GM12878 (cell line): ENCODE measurements at regions of chr1 and their contacts with region 1.

Region 1: GRCh38 chr1:106072909-106073600 is 983.4 kb upstream of the PRMT6 start:
- DNase-seq: no peak
- ATAC-seq: peak; percentile 99
- H3K4me3 ChIP-seq: no peak overlapping the region
- H3K27ac ChIP-seq: no peak overlapping the region
- H3K4me1 ChIP-seq: no peaks in the 10 kb centered on the region
- H3K27me3 ChIP-seq: no peaks in the 10 kb centered on the region
- CTCF ChIP-seq: no peak
- EP300 ChIP-seq: no peak
- POLR2A ChIP-seq: no peak
- RAD21 ChIP-seq: no peak

Region 2: DNA sequence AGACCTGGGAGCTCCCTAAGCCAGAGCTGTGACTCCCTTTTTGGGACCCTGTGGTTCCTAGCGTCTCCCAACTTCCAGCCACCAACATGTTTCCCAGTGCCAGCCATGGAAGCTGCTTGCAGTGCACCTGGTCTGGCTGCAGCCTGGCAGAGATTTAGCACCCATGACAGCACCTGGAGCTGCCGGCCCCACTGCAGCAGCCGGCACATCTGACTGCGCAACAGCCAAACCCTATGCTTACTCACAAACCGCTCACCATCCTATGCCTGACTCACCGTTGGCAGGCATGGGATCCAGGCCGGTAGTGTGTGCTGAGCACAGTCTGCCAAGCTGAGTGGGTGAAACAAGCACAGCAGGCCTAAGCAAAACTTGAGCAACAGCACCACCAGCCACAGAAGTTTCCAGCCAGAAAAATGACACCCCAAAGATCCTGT is 547.5 kb after region 1 on chr1:
- CTCF ChIA-PET with region 1: no interaction called
- POLR2A ChIA-PET with region 1: no interaction called
- RAD21 ChIA-PET with region 1: no interaction called
- SMC1A ChIA-PET with region 1: no interaction called
- in situ Hi-C with region 1: no loop called
- intact Hi-C with region 1: no loop called
- DNase-seq: no peak
- ATAC-seq: no peak
- H3K4me3 ChIP-seq: no peak overlapping the region
- H3K27ac ChIP-seq: no peak overlapping the region
- H3K4me1 ChIP-seq: no peaks in the 10 kb centered on the region
- H3K27me3 ChIP-seq: no peaks in the 10 kb centered on the region; a peak in 1 of 4 replicates
- CTCF ChIP-seq: no peak
- EP300 ChIP-seq: no peak
- POLR2A ChIP-seq: no peak
- RAD21 ChIP-seq: no peak

Region 3: DNA sequence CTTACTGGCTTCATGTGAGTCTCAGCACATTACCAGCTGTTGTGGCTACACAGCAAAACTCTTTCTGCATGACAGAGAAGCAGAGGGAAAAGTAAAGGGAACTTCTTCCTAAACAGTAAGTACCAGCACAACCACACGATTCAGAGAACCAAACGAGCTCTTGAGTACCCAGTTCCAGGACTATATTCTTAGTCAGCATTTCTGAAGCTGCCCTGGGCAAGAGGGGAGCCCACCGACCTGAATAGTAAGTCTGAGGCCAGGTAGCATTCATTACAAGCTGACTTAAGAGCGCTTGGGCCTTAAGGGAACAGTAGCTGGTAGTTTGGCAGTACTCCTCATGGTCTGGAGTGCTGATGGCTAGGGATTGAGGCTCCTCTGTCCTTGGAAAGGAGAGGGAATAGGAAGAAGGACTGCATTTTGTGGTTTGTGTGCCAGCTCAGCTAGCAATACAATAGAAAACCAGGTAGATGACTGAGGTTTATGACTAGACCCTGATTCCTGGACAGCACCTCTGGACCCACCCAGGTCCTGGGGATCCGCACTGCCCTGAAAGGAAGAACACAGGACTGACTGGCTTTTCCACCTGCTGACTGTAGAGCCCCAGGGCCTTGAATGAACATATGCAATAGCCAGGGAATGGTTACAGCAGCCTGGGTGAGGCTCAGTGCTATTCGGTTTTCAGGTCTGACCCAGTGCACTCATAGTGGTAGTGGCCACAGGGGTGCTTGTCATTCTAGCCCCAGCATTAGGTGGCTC is 586.6 kb after region 1 on chr1:
- CTCF ChIA-PET with region 1: no interaction called
- POLR2A ChIA-PET with region 1: no interaction called
- RAD21 ChIA-PET with region 1: no interaction called
- SMC1A ChIA-PET with region 1: no interaction called
- in situ Hi-C with region 1: no loop called
- intact Hi-C with region 1: loop called (anchors 5 kb)
- DNase-seq: no peak
- ATAC-seq: no peak
- H3K4me3 ChIP-seq: no peak overlapping the region
- H3K27ac ChIP-seq: no peak overlapping the region
- H3K4me1 ChIP-seq: no peaks in the 10 kb centered on the region
- H3K27me3 ChIP-seq: no peaks in the 10 kb centered on the region
- CTCF ChIP-seq: no peak
- EP300 ChIP-seq: no peak
- POLR2A ChIP-seq: no peak
- RAD21 ChIP-seq: no peak